Breast epithelium (tissue), 4 donors: ENCODE measurements at regions of chr13 and their contacts with region 1.

Region 1: GRCh38 chr13:57739089-57739488 is 107.5 kb downstream of the PCDH17 start:
- DNase-seq: no peak
- H3K4me3 ChIP-seq: no peak overlapping the region
- H3K27ac ChIP-seq: no peak overlapping the region
- H3K4me1 ChIP-seq: no peaks in the 10 kb centered on the region
- H3K27me3 ChIP-seq: no peaks in the 10 kb centered on the region
- CTCF ChIP-seq: no peak
- POLR2A ChIP-seq: no peak

Region 2: DNA sequence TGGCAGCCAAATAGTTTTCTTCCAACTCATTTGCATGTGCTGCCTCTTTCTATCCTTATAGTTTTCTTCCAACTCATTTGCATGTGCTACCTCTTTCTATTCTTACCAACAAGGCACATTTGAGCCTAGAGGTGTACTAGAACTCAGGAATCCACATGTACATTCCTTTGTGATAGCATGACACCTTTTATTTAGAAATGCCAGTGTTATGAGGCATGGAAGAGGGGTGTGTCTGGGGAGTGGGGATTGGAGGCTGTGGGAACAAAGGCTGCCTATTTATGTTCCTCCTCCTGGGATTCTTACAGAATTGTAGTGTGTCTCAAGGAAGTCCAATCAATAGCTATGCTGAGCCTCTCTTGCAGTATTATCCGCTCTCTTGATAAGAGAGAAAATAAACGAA is 859.2 kb after region 1 on chr13:
- intact Hi-C with region 1: loop called (anchors 5 kb)
- DNase-seq: no peak
- H3K4me3 ChIP-seq: no peak overlapping the region
- H3K27ac ChIP-seq: no peak overlapping the region
- H3K4me1 ChIP-seq: no peaks in the 10 kb centered on the region
- H3K27me3 ChIP-seq: no peaks in the 10 kb centered on the region
- CTCF ChIP-seq: no peak
- POLR2A ChIP-seq: no peak